ENCODE measurements at regions of chr15 and their contacts with region 1.

Region 1: GRCh38 chr15:23877502-23878412 is 190.7 kb upstream of the NDN start:
- DNase-seq: no peak

Region 2: GRCh38 chr15:23648920-23649515 is 228.7 kb before region 1 on chr15:
- intact Hi-C with region 1: loop called (anchors 5 kb)
- DNase-seq: no peak

Region 3: GRCh38 chr15:24856397-24857390 is 978.9 kb after region 1 on chr15:
- intact Hi-C with region 1: no loop called
- DNase-seq: no peak